ENCODE measurements at regions of chr10 and their contacts with region 1.

Region 1: GRCh38 chr10:98425511-98426352 is 10.8 kb upstream of the PYROXD2 start:
- DNase-seq: peak; percentile 60
- ATAC-seq: peak; percentile 73
- H3K4me3 ChIP-seq: no peak overlapping the region
- H3K4me3 Mint-ChIP-seq: no peak overlapping the region
- H3K27ac ChIP-seq: no peak overlapping the region
- H3K27ac Mint-ChIP-seq: no peak overlapping the region
- H3K4me1 ChIP-seq: no peaks in the 10 kb centered on the region
- H3K4me1 Mint-ChIP-seq: peaks cover 2% of the 10 kb centered on the region
- H3K27me3 ChIP-seq: no peaks in the 10 kb centered on the region
- H3K27me3 Mint-ChIP-seq: no peaks in the 10 kb centered on the region
- CTCF ChIP-seq: peak; percentile 87

Region 2: DNA sequence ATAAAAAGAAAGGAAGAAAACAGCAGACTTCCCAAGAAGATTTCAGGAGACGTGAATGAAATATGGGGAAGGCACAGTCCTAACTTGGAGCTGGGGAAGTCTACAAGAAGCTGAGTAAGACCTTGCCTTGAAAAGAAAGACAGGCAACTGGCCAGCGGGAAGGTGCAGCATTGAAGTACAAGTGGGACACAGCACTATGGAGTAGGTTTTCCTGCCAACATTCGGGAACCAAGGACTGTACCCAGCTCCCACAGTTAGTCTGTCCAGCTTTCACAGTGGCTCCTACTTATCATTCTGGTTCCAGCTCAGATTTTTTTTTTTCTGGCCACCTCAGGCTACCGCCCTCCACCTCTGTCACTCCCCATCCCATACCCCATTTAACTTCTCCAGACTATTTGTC is 11.0 kb after region 1 on chr10:
- CTCF ChIA-PET with region 1: interaction called, 20 read pairs
- POLR2A ChIA-PET with region 1: no interaction called
- intact Hi-C with region 1: no loop called
- DNase-seq: no peak
- ATAC-seq: no peak
- H3K4me3 ChIP-seq: no peak overlapping the region
- H3K4me3 Mint-ChIP-seq: no peak overlapping the region
- H3K27ac ChIP-seq: no peak overlapping the region
- H3K27ac Mint-ChIP-seq: no peak overlapping the region
- H3K4me1 ChIP-seq: no peaks in the 10 kb centered on the region
- H3K4me1 Mint-ChIP-seq: peaks cover 9% of the 10 kb centered on the region
- H3K27me3 ChIP-seq: no peaks in the 10 kb centered on the region
- H3K27me3 Mint-ChIP-seq: no peaks in the 10 kb centered on the region
- CTCF ChIP-seq: no peak

Region 3: GRCh38 chr10:98446661-98447221 is 21.0 kb after region 1 on chr10 and contains the start of gene HPS1:
- CTCF ChIA-PET with region 1: interaction called, 14 read pairs
- POLR2A ChIA-PET with region 1: interaction called, 6 read pairs
- intact Hi-C with region 1: no loop called
- DNase-seq: peak; percentile 92
- ATAC-seq: peak; percentile 85
- H3K4me3 ChIP-seq: peak within 1 kb of the TSS; percentile 55 to 88 (median 82)
- H3K4me3 Mint-ChIP-seq: peak within 1 kb of the TSS; percentile 90
- H3K27ac ChIP-seq: peak within 1 kb of the TSS; percentile 94 to 97
- H3K27ac Mint-ChIP-seq: peak within 1 kb of the TSS; percentile 95
- H3K4me1 ChIP-seq: peaks cover 28 to 39% of the 10 kb centered on the region in 2 donors
- H3K4me1 Mint-ChIP-seq: peaks cover 49% of the 10 kb centered on the region
- H3K27me3 ChIP-seq: no peaks in the 10 kb centered on the region
- H3K27me3 Mint-ChIP-seq: no peaks in the 10 kb centered on the region
- CTCF ChIP-seq: no peak
- total RNA-seq, gene HPS1: 125 TPM in 2 replicates